PC-9 (cell line): ENCODE measurements at regions of chr17 and their contacts with region 1.

Region 1: GRCh38 chr17:67366193-67367157 is at the start of gene PSMD12:
- DNase-seq: peak; percentile 71 to 94
- H3K4me3 ChIP-seq: peak within 1 kb of the TSS; percentile 89
- H3K27ac ChIP-seq: peak within 1 kb of the TSS; percentile 82
- H3K4me1 ChIP-seq: peaks cover 24% of the 10 kb centered on the region
- H3K27me3 ChIP-seq: no peaks in the 10 kb centered on the region
- CTCF ChIP-seq: no peak
- total RNA-seq, gene PSMD12: 46.8 and 80.5 TPM in 2 replicates

Region 2: GRCh38 chr17:67245073-67245755 is 121.3 kb before region 1 on chr17 and contains the start of gene HELZ:
- CTCF ChIA-PET with region 1: no interaction called
- POLR2A ChIA-PET with region 1: no interaction called
- intact Hi-C with region 1: loop called (anchors 5 kb)
- DNase-seq: peak; percentile 74 to 77
- H3K4me3 ChIP-seq: peak within 1 kb of the TSS; percentile 99
- H3K27ac ChIP-seq: peak within 1 kb of the TSS; percentile 65
- H3K4me1 ChIP-seq: peaks cover 27% of the 10 kb centered on the region
- H3K27me3 ChIP-seq: no peaks in the 10 kb centered on the region
- CTCF ChIP-seq: no peak
- total RNA-seq, gene HELZ: 35.1 and 38.0 TPM in 2 replicates

Region 3: GRCh38 chr17:67311575-67311974 is 54.9 kb before region 1 on chr17:
- CTCF ChIA-PET with region 1: no interaction called
- POLR2A ChIA-PET with region 1: no interaction called
- intact Hi-C with region 1: loop called (anchors 1 kb)
- DNase-seq: no peak
- H3K4me3 ChIP-seq: no peak overlapping the region
- H3K27ac ChIP-seq: no peak overlapping the region
- H3K4me1 ChIP-seq: peaks cover 7% of the 10 kb centered on the region
- H3K27me3 ChIP-seq: no peaks in the 10 kb centered on the region
- CTCF ChIP-seq: no peak

Region 4: DNA sequence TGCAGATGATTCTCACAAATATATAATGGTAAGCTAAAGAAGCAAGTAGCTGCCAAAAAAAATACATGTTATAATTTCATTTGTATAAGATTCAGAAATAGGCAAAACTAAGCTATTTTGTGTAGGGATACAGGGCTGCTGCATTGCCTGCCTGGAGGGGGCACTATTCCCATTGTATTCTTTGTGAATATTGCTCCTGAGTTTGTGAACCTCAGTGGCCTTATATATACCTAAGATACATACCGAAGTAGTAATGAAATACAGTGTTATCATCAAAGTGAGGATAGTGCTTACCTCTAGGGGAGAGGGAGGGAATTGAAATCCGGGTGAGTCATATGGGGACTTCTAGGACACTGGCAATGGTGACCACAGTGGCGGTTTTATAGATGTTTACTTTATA is 576.3 kb after region 1 on chr17:
- CTCF ChIA-PET with region 1: no interaction called
- POLR2A ChIA-PET with region 1: no interaction called
- intact Hi-C with region 1: no loop called
- DNase-seq: no peak
- H3K4me3 ChIP-seq: no peak overlapping the region
- H3K27ac ChIP-seq: no peak overlapping the region
- H3K4me1 ChIP-seq: no peaks in the 10 kb centered on the region
- H3K27me3 ChIP-seq: no peaks in the 10 kb centered on the region
- CTCF ChIP-seq: peak; percentile 47

Region 5: DNA sequence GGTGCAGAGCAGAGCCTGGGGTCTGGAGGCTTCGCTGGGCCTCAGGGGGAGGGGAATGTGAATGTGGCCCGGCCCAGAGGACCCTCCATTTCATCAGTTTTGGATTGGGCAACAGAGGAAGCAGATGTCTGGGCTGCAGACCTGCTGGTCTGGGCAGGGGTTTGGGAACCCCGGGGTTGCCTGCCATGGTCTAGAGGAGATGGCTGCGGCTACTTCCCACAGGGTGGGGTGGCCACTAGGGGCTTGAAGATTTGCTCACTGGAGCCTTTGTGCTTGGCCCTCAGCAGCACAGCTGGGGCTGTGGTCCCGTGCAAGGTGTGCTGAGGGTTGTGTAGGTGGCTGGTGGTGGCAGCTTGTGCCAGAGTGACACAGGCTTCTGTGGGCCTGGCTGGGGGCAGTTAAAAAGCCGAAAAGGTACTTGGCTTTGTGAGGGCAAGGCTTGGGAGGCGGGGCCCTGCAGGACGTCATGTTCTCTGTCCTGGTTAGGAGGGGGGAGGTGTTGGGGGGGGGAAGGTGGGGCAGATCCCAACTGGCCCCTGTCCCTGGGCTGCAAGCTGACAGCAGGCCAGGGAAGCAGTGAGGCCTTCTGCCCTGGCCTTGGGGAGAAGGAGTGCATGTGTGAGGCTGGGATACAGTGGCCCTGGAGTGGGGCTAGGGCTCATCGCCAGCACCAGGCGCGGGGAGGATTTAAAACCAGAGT is 767.0 kb after region 1 on chr17:
- CTCF ChIA-PET with region 1: no interaction called
- POLR2A ChIA-PET with region 1: no interaction called
- intact Hi-C with region 1: no loop called
- DNase-seq: no peak
- H3K4me3 ChIP-seq: no peak overlapping the region
- H3K27ac ChIP-seq: no peak overlapping the region
- H3K4me1 ChIP-seq: no peaks in the 10 kb centered on the region
- H3K27me3 ChIP-seq: no peaks in the 10 kb centered on the region
- CTCF ChIP-seq: no peak